Thyroid gland (tissue), 4 donors: ENCODE measurements at regions of chr16 and their contacts with region 1.

Region 1: DNA sequence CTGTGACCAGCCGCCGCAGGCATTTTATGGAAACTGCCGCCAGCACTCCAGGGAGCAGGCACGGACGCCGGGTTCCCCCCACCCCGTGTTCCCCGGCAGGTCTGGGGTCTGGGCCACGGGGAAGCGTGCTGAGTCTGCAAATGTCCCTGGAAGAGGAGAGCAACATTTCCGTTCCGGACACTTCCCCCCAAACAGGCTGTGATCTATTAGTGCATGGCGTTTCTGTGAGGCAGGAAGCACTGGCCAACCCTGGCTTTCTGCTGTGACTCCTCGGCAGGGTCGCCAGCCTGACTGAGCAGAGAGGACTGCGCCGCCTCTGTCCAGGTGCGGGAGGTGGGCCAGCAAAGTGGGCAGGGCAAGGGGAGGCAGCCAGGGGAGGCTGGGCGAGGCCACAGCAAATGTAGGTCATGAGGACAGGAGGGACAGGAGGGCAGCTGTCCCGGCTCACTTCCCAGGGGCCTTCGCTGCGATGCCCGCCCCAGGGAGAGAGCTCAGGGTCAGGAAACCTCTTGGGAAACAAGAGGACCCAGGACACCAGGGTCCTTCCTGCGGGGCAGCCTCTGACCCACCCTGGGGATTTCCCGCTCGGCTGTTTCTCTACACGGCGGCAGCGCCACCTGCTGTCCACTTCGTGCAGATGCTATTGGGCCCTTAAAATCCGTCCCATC is 9.5 kb downstream of the FOXF1 start:
- DNase-seq: peak; percentile 43 to 48
- H3K4me3 ChIP-seq: no peak overlapping the region
- H3K27ac ChIP-seq: no peak overlapping the region
- H3K4me1 ChIP-seq: peaks cover 0 to 6% of the 10 kb centered on the region in 2 donors
- H3K27me3 ChIP-seq: peaks cover 11% of the 10 kb centered on the region
- CTCF ChIP-seq: peak; percentile 50 to 93 (median 62)
- POLR2A ChIP-seq: no peak

Region 2: DNA sequence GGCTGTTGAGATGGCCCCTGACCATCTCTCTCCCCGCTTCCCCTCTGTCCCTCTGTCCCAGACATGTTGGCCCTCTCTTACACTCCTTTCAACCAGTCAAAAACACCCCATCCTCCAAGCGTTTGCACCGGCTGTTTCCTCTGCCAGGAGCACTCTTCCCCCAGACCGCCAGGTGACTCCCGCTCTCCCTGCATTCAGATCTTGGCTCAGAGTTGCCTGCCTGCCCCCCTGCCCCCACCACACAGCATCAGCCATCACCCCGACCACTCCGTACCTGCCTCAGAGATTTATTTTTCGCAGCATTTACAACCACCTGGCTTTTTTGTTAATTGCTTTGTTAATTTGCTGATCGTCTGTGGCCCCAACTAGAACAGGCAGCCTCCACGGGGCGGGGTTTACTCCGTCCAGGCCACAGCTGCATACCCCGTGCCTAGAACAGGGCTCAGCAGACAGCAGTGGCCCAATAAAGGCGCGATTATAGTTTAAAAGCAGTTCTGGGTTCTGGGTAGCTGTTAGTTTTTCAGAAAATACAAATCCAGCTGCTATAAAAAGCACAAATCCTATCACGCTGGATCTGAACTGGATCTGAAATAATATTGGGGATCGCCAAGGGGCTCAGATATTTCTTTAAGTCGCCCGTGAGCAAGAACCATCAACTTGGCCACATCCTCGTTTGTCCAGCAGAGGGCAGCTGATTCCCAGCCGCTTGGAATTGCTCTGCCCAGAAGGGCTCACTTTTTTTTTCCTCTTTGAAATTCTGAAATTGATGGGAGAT is 447.3 kb before region 1 on chr16:
- intact Hi-C with region 1: loop called (anchors 5 kb)
- DNase-seq: peak; percentile 44 to 53
- H3K4me3 ChIP-seq: no peak overlapping the region
- H3K27ac ChIP-seq: no peak overlapping the region
- H3K4me1 ChIP-seq: no peaks in the 10 kb centered on the region
- H3K27me3 ChIP-seq: no peaks in the 10 kb centered on the region
- CTCF ChIP-seq: peak; percentile 34 to 76 (median 49)
- POLR2A ChIP-seq: no peak

Region 3: GRCh38 chr16:86325895-86326294 is 193.9 kb before region 1 on chr16:
- intact Hi-C with region 1: no loop called
- DNase-seq: no peak
- H3K4me3 ChIP-seq: no peak overlapping the region
- H3K27ac ChIP-seq: no peak overlapping the region
- H3K4me1 ChIP-seq: no peaks in the 10 kb centered on the region
- H3K27me3 ChIP-seq: no peaks in the 10 kb centered on the region
- CTCF ChIP-seq: no peak
- POLR2A ChIP-seq: no peak

Region 4: GRCh38 chr16:86338404-86339115 is 181.2 kb before region 1 on chr16:
- intact Hi-C with region 1: loop called (anchors 5 kb)
- DNase-seq: no peak
- H3K4me3 ChIP-seq: no peak overlapping the region
- H3K27ac ChIP-seq: no peak overlapping the region
- H3K4me1 ChIP-seq: peaks cover 0 to 4% of the 10 kb centered on the region in 2 donors
- H3K27me3 ChIP-seq: no peaks in the 10 kb centered on the region
- CTCF ChIP-seq: no peak
- POLR2A ChIP-seq: no peak

Region 5: DNA sequence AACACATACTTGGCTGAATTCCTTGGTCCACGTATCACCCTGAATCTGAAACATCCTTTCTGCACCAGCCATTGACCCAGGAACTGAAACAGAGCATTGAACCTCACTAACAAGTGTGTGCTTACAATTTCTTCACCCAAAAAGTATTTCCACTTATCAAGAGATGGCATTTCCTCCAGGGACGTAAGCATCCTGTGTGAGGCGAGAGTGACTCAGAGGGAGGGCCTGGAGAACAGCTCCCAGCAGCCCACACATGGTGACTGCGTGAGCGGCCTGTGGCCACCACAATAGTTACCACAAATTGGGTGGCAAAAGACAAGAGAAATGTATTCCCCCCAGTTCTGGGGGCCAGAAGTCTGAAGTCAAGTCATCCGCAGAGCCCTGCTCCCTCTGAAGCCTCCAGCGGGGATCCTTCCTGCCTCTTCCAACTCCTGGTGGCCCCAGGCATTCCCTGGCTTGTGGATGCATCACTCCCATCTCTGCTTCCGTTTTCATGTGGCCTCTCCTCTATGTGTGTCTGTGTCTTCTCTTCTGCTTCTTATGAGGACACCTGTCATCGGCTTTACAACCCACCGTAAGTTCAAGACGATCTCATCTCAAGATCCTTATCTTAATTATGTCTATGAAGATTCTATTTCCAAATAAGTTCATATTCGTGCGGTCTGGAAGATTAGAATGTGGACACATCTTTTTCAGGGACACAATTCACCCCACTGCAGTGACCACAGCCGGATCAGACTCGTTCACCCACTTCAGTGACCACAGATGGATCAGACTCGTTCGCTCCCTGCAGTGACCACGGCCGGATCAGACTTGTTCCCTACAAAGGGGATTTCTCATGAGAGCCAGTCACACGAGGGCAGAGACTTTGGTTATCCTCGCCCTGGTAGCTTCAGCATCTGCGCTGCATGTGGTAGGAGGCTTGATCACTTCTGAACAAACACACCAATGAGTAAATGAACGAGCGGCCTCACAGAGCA is 132.0 kb before region 1 on chr16:
- intact Hi-C with region 1: no loop called
- DNase-seq: no peak
- H3K4me3 ChIP-seq: no peak overlapping the region
- H3K27ac ChIP-seq: no peak overlapping the region
- H3K4me1 ChIP-seq: no peaks in the 10 kb centered on the region
- H3K27me3 ChIP-seq: no peaks in the 10 kb centered on the region
- CTCF ChIP-seq: no peak
- POLR2A ChIP-seq: no peak